ENCODE measurements at regions of chr6 and their contacts with region 1.

Region 1: GRCh38 chr6:170039156-170040107 is 251.4 kb downstream of the DLL1 start:
- DNase-seq: peak in 1 of 2 donors; percentile 3
- ATAC-seq: no peak
- H3K4me3 ChIP-seq: no peak overlapping the region
- H3K27ac ChIP-seq: no peak overlapping the region
- H3K4me1 ChIP-seq: peaks cover 16 to 30% of the 10 kb centered on the region in 2 donors
- H3K27me3 ChIP-seq: no peaks in the 10 kb centered on the region
- CTCF ChIP-seq: no peak
- POLR2A ChIP-seq: no peak

Region 2: DNA sequence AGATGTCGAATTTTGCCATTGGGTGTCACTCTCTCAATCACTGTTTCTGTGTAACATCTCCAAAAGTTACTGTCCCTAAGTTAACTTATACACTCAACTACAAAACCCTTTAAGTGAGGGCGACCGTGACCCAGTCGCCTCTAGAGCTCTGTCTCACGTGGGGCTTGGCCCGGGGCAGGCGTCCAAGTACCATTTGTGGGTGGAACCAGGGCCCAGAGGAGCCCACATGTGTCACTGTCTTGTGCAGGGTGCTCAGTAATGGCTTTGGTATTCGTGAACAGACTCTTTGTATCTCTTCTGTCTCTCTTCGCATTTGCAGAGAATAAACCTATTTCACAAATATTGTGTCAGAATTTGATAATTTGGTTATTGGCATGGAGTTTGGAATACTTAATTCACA is 675.8 kb before region 1 on chr6:
- in situ Hi-C with region 1: no loop called
- intact Hi-C with region 1: no loop called
- DNase-seq: no peak
- ATAC-seq: no peak
- H3K4me3 ChIP-seq: no peak overlapping the region
- H3K27ac ChIP-seq: no peak overlapping the region
- H3K4me1 ChIP-seq: no peaks in the 10 kb centered on the region
- H3K27me3 ChIP-seq: no peaks in the 10 kb centered on the region
- CTCF ChIP-seq: no peak
- POLR2A ChIP-seq: no peak

Region 3: DNA sequence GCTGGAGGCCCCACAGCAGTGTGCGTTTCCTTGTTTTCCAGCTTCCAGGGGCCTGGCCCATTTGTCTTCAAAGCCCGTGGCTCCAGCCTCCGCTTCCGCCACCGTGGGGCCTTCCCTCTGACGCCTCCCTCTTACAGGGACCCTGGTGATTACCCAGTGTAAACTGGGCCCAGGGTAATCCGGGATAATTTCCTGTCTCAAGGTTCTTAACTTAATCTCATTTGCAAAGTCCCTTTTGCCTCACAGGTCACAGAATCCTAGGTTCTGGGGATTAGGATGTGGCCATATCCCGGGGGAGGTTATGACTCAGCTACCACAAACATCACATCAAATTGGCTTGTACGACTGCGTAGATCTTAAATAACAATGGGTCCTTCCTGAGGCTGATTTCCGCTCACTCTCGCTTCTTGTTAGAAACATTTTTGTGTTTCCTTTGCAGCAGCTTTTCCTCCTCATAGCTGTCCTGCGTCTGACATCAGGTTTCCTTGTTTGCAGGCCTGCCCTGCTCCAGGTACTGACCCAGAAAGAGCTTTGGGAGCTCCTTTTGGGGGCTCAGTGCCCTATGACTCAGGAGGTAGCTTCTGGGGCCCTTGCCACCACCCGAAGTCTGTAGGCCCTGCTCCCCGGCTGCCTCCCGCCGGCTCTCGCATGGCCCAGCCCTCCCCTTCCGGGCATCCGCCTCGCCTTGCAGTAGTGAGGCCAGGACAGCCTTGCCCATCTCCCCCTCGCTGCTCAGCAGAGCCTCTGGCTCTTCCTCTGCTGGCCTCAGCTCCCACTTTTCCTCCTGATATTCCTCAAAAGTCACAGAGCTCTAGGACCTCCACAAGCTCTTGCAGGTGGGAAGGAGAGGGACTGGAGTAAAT is 187.6 kb before region 1 on chr6:
- in situ Hi-C with region 1: no loop called
- intact Hi-C with region 1: no loop called
- DNase-seq: no peak
- ATAC-seq: peak; percentile 72 to 77
- H3K4me3 ChIP-seq: no peak overlapping the region
- H3K27ac ChIP-seq: peak overlapping the region; percentile 47 to 74 (median 68)
- H3K4me1 ChIP-seq: peaks cover 0 to 10% of the 10 kb centered on the region in 2 donors
- H3K27me3 ChIP-seq: no peaks in the 10 kb centered on the region
- CTCF ChIP-seq: no peak
- POLR2A ChIP-seq: no peak

Region 4: DNA sequence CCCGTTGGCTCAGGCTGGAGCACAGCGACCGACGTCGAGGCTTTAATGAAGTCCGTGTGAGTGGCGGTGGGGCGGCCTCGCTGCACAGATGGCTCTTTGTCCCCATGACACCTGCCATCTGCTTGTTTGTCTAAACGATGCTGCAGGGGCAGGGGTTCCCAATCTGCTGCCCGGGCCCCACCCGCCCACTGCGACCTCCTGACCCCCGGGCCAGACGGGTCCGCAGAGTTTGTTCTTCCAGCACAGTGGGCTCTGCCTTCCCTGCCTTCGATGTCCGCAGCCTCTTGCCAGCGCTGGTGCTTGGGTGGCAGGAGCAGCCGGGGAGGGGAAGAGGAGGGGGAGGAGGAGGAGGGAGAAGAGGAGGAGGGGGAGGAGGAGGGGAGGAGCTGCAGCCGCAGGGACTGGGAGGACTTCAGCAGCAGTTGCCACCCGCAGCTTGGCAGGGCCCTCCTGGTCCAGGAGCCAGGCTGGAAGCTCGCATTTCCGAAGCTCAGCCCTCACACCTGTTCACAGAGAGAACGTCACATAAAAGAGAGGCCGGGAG is 41.5 kb after region 1 on chr6:
- in situ Hi-C with region 1: no loop called
- intact Hi-C with region 1: loop called (anchors 5 kb)
- DNase-seq: peak; percentile 22 to 74
- ATAC-seq: peak; percentile 73 to 86
- H3K4me3 ChIP-seq: peak overlapping the region in 3 of 4 donors; percentile 6 to 41 (median 15)
- H3K27ac ChIP-seq: peak overlapping the region in 1 of 4 donors; percentile 38
- H3K4me1 ChIP-seq: peaks cover 0 to 12% of the 10 kb centered on the region in 2 donors
- H3K27me3 ChIP-seq: no peaks in the 10 kb centered on the region
- CTCF ChIP-seq: no peak
- POLR2A ChIP-seq: no peak

Region 5: DNA sequence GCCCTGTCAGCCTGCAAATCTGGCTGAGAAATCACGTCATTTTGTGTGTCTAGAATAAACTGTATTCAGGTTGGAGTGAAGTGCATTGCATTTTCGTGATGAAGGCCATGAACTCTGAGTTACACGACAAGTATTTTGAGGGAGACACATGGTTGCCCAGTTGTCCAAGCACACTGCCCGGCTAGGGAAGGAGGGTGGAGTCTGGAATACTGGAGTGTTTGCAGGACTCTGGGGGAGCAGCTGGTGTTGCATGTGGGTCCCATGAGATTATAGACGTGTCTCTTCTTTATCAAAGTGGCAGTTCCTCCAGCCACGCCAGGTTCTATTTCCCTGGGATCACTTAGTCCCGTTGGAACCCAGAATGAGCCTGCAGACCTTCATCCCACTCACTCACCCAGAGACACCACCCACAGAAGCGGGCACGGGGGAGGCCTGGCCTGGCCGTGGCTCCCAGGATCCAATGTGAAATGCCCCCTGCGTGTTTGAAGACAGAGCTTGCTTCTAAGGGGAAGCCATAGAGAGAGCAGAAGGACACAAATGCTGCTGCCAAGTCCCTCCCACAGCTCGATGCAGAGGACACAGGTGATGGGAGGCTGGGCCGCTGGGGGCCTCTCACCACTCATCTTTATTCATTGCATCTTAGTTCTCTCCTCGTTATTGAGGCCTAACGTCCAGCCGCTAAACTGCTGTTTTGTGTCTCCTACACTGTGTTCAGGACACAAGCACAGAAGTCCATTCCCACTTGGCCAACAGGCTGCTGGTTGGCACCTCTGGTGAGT is 191.5 kb after region 1 on chr6:
- in situ Hi-C with region 1: no loop called
- intact Hi-C with region 1: loop called (anchors 1 kb)
- DNase-seq: no peak
- ATAC-seq: peak; percentile 20 to 45
- H3K4me3 ChIP-seq: peak overlapping the region in 1 of 4 donors; percentile 25
- H3K27ac ChIP-seq: peak overlapping the region in 2 of 4 donors; percentile 23 to 56
- H3K4me1 ChIP-seq: peaks cover 22 to 32% of the 10 kb centered on the region in 2 donors
- H3K27me3 ChIP-seq: no peaks in the 10 kb centered on the region
- CTCF ChIP-seq: no peak
- POLR2A ChIP-seq: no peak